ENCODE measurements at regions of chr16 and their contacts with region 1.

Region 1: DNA sequence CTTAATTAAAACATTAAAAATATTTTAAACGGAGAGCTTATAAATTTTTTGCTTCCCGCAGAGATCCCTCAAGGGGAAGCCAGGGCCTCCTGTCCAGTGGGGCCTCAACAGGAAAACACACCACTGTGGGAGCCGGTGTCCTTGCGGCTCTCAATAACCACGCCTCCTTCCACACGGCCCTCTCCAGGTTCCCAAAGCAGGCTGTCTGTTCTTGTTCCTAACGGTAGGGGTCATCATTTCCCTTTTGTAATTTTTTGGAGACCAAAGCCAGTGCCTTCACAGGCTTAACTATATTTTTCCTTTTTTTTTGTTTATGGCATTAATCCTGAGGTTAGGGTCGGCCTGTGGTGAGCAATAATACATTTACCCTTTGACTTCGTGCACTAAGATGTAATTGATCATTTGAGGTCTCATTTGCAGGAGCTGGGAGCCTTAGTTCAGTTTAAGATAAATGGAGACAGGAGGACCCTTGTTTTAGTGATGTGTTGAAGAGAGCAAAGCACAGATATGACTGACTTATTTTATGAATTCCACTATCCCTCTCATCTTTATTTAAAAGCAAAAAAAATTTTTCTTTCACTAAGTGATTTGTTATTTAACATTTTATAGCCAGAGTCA is 77.5 kb upstream of the N4BP1 start:
- DNase-seq: peak; percentile 71 to 81 (median 76)
- ATAC-seq: peak; percentile 100
- H3K4me3 ChIP-seq: no peak overlapping the region
- H3K27ac ChIP-seq: no peak overlapping the region
- H3K4me1 ChIP-seq: no peaks in the 10 kb centered on the region
- H3K27me3 ChIP-seq: peaks cover 0 to 5% of the 10 kb centered on the region in 2 experiments; a peak in 1 of 5 replicates
- CTCF ChIP-seq: peak; percentile 66 to 85 (median 72)
- EP300 ChIP-seq: no peak
- POLR2A ChIP-seq: no peak
- RAD21 ChIP-seq: peak; percentile 48 to 68

Region 2: DNA sequence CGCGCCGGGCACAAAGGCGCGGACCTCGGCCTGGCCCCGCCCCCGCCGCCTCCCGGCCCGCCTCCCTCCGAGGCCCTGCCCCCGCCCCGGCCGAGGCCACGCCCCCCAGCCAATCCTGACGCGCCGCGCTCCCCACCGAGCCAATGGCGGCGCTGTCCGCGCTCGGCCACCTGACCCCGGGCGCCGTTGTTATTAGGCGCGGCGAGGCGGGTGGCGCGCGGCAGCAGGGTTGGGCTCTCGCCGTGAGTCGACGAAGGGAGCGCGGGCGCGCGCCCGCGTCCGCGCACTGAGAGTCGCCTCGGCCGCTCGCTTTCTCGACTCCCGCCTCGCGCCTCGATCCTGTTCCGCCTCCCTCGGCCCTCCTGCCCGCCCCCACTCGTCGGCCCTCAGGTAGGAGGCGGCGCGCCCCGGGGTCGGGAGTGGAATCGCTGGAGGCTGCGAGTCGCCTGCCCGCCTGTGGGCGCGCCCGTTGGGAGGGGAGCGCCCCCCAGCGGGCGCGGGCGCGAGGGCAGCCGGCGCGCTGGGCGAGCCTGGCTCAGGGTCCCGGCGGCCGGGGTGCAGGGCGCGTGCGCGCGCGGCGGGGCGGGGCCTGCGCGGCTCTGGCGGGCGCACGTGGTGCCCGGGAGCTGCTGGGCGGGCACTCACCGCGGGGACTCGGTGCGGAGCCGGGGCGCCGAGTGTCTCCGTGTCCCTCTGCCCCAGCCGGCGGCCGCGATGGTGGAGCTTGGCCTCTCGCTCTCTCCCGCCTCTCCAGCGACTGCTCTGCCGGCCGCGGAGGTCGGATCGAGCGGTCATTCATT is 594.5 kb after region 1 on chr16:
- CTCF ChIA-PET with region 1: no interaction called
- POLR2A ChIA-PET with region 1: no interaction called
- in situ Hi-C with region 1: no loop called
- intact Hi-C with region 1: loop called (anchors 5 kb)
- DNase-seq: peak; percentile 92 to 99 (median 99)
- ATAC-seq: peak; percentile 99
- H3K4me3 ChIP-seq: peak overlapping the region; percentile 50
- H3K27ac ChIP-seq: peak overlapping the region; percentile 65; the same call in 2 of the 3 replicates
- H3K4me1 ChIP-seq: peaks cover 0 to 17% of the 10 kb centered on the region in 2 experiments; a peak in 3 of 5 replicates
- H3K27me3 ChIP-seq: peaks cover 17 to 36% of the 10 kb centered on the region in 2 experiments
- CTCF ChIP-seq: peak; percentile 52 to 87 (median 56)
- EP300 ChIP-seq: no peak
- POLR2A ChIP-seq: no peak
- RAD21 ChIP-seq: peak in 1 of 2 experiments; percentile 40; a peak in 2 of 4 replicates

Region 3: DNA sequence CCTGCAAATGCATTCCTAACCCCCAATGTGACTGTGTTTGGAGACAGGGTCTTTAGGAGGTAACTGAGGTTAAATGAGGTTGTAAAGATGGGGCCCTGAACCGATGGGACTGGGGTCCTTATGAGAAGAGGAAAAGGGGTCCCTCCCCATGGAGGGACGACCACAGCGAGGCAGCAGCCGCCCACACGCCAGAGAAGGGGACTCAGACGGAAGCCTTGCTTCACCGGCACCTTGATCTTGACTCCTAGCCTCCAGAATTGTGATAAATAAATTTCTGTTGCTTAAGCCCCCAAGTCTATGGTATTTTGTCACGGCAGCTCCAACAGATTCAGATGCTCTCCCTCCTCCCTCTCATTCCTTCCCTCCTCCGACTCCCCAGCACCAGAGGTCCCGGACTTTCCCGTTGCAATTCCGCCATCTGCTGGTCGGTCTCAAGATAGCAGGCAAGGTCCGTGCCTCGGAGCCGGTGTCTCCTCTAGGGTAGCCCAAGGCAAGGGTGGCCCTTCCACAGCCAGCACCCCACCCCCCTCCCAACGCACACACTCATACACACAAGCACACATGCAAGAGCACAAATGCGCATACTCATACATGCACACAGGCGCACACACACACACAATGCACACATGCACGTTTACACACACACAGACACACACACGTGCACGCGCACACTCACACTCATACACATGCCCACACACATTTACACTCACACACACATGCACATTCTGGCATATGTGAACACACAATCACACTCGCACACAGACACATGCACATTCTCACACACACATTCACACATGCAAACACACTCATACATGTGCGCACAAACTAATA is 663.0 kb after region 1 on chr16:
- CTCF ChIA-PET with region 1: interaction called, 11 read pairs
- POLR2A ChIA-PET with region 1: interaction called, 3 read pairs
- in situ Hi-C with region 1: loop called (anchors 10 kb)
- intact Hi-C with region 1: loop called (anchors 1 kb)
- DNase-seq: peak; percentile 67 to 78 (median 76)
- ATAC-seq: peak; percentile 91
- H3K4me3 ChIP-seq: no peak overlapping the region
- H3K27ac ChIP-seq: no peak overlapping the region
- H3K4me1 ChIP-seq: no peaks in the 10 kb centered on the region
- H3K27me3 ChIP-seq: peaks cover 0 to 3% of the 10 kb centered on the region in 2 experiments; a peak in 1 of 5 replicates
- CTCF ChIP-seq: peak; percentile 81 to 82 (median 82)
- EP300 ChIP-seq: no peak
- POLR2A ChIP-seq: no peak
- RAD21 ChIP-seq: peak; percentile 60 to 79

Measured in K562 (cell line).